Cardiac septum (tissue), 1 donor: ENCODE measurements at regions of chr4 and their contacts with region 1.

Region 1: GRCh38 chr4:53015681-53016080 is 153.6 kb downstream of the RASL11B start:
- DNase-seq: no peak

Region 2: GRCh38 chr4:52780206-52780605 is 235.5 kb before region 1 on chr4:
- intact Hi-C with region 1: no loop called
- DNase-seq: no peak

Region 3: GRCh38 chr4:53189011-53189410 is 173.3 kb after region 1 on chr4:
- intact Hi-C with region 1: loop called (anchors 5 kb)
- DNase-seq: no peak

Region 4: GRCh38 chr4:53377319-53378170 is 361.9 kb after region 1 on chr4 and contains the start of gene FIP1L1:
- intact Hi-C with region 1: loop called (anchors 10 kb)
- DNase-seq: peak; percentile 98
- total RNA-seq, gene FIP1L1: 39.2 TPM

Region 5: DNA sequence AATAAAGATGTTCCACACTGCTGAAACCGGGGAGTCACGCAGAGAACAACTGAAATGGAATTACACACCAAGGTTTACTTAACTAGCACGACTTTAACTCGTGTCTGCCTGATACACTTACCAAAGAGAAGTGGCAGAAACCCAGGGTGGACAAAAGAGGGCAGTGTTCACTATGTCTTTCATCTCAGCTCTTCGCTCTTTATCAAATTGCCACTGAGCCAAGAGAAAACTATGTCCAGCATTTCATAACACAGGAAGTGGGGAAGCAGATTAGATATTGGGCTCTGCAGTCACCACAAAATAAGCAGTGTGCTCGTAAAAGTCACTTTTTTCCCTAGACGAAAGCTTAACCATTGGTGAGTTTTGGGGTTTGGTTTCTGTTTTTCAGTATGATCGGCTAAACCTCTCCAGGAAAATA is 893.0 kb after region 1 on chr4:
- intact Hi-C with region 1: loop called (anchors 5 kb)
- DNase-seq: no peak